Pancreas (tissue), 10 donors: ENCODE measurements at regions of chr1 and their contacts with region 1.

Region 1: DNA sequence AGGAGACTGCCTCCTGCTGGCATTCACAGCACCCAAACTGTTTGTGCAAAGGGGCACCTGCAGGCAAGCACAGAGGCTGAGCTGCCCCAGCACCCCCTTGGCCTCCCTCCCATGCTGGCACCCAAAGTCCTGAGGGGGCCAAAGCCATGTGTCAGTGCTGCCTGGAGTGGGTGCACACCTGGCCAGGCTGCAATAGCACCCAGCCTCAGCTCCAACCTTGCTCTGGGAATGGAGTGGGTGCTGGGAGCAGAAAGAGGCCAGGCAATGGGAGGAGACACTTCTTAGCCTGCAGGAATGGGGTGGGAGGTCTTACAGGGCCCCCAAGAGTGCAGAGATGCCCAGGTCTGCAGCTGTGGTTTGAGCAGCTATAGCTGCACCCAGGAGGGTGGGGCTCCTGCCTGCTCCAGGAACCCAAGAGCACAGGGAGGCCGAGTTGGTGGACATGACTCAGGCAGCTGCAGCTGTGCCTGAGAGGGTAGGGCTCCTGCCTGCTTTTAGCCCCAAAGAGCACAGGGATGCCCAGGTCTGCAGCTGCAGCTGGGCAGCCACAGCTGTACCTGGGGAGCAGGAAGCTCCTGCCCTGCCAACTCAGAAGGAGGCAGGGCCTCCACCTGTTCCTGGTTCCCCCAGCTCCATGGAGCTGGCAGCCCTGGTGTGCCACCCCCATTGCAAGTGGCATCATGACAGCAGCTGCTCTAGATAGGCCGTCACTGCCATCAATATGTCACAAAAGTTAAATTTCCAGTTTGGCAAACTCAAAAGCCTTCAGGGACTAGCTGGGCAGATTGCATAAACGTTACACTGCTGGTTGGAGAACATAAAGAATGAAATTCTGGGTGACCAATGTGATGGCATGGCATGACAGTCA is 5.3 kb upstream of the CHD1L start:
- DNase-seq: peak in 3 of 6 donors; percentile 39 to 49 (median 48)
- ATAC-seq: peak; percentile 30 to 50 (median 36)
- H3K4me3 ChIP-seq: no peak overlapping the region
- H3K27ac ChIP-seq: peak overlapping the region; percentile 22 to 79 (median 52)
- H3K4me1 ChIP-seq: peaks cover 33 to 49% (median 44%) of the 10 kb centered on the region in 3 donors
- H3K27me3 ChIP-seq: no peaks in the 10 kb centered on the region
- CTCF ChIP-seq: no peak

Region 2: DNA sequence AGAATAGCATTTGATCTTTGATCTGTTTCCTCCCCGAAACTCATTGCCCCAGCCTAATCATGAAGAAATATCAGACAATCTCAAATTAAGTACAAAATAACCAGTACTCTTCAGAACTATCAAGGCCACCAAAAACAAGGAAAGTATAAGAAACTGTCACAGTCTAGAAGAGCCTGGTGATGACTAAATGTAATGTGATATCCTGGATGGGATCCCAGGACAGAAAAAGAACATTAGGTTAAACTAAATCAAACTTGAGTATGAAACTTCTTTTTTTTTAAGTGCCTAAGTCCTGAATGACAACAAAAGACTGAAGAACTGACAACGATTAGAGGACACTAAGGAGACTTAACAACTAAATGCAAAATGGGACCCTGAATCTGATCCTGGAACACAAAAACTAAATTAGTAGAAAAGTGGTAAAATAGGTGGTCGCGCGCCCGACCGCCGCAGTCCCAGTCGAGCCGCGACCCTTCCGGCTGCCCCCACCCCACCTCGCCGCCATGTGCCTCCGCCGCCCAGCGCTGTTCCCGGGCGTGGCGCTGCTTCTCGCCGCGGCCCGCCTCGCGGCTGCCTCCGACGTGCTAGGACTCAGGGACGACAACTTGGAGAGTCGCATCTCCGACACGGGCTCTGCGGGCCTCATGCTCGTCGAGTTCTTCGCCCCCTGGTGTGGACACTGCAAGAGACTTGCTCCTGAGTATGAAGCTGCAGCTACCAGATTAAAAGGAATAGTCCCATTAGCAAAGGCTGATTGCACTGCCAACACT is 59.4 kb before region 1 on chr1:
- intact Hi-C with region 1: loop called in 2 of 3 experiments (anchors 2 to 5 kb)
- DNase-seq: peak in 2 of 6 donors; percentile 34 to 56
- ATAC-seq: no peak
- H3K4me3 ChIP-seq: no peak overlapping the region
- H3K27ac ChIP-seq: no peak overlapping the region
- H3K4me1 ChIP-seq: peaks cover 7 to 12% (median 9%) of the 10 kb centered on the region in 3 donors
- H3K27me3 ChIP-seq: no peaks in the 10 kb centered on the region
- CTCF ChIP-seq: no peak

Region 3: DNA sequence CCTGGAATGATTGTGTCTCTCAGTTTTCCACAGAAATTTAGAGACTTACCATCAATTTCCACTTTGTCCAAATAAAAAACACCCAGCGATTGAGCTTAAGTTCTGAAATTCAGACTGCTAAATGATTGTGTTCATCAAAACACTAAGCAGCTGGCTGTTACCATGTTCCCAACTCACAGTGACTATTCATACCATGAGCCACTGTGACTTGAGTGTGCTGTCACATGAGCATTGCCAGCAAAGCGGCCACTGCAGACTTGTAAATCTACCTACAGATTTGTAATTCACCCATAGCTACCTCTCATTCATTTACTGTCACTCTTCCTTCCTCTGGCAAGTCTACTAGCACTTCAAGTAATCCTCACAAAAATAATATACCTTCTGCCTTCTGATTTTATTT is 47.7 kb before region 1 on chr1:
- intact Hi-C with region 1: no loop called
- DNase-seq: no peak
- ATAC-seq: no peak
- H3K4me3 ChIP-seq: no peak overlapping the region
- H3K27ac ChIP-seq: no peak overlapping the region
- H3K4me1 ChIP-seq: peaks cover 0 to 13% (median 5%) of the 10 kb centered on the region in 3 donors
- H3K27me3 ChIP-seq: no peaks in the 10 kb centered on the region
- CTCF ChIP-seq: no peak

Region 4: DNA sequence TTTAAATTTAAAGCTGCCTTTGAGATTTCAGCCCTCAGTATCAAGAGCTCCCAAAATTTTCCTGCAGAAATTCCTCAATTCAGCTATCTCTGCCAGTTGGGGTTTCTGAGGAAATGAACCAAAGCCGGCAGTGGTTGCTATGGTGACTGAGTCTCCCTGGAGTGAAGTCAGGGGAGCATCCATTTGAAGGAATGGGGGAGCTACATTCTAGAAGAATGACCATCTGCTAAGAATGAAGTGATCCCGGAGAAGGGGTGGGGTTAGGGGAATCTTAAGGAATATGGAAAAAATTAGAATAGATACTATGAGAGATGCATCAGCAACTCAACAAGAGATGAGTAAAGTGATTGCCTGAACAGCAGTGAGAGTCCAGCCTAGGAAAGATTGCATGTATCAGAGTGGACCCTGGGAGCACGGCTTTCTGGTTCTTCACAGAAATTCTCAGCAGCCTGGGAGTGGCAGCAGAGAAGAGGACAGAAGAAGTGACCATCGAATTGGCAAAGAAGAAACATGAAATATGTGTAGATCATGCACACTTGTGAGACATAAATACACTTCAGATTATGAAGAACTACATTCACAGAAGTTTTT is 99.9 kb after region 1 on chr1:
- intact Hi-C with region 1: no loop called
- DNase-seq: no peak
- ATAC-seq: no peak
- H3K4me3 ChIP-seq: no peak overlapping the region
- H3K27ac ChIP-seq: no peak overlapping the region
- H3K4me1 ChIP-seq: no peaks in the 10 kb centered on the region
- H3K27me3 ChIP-seq: peaks cover 0 to 4% (median 0%) of the 10 kb centered on the region in 4 donors
- CTCF ChIP-seq: no peak